K562 (cell line): ENCODE measurements at regions of chr1 and their contacts with region 1.

Region 1: GRCh38 chr1:9196129-9197040 is 38.2 kb upstream of the H6PD start:
- DNase-seq: peak; percentile 65 to 71 (median 68)
- ATAC-seq: peak; percentile 93
- H3K4me3 ChIP-seq: no peak overlapping the region
- H3K27ac ChIP-seq: no peak overlapping the region
- H3K4me1 ChIP-seq: peaks cover 0 to 3% of the 10 kb centered on the region in 2 experiments; a peak in 1 of 5 replicates
- H3K27me3 ChIP-seq: peaks cover 53 to 76% of the 10 kb centered on the region in 2 experiments
- CTCF ChIP-seq: peak; percentile 90 to 97 (median 94)
- EP300 ChIP-seq: no peak
- POLR2A ChIP-seq: no peak
- RAD21 ChIP-seq: peak; percentile 96

Region 2: DNA sequence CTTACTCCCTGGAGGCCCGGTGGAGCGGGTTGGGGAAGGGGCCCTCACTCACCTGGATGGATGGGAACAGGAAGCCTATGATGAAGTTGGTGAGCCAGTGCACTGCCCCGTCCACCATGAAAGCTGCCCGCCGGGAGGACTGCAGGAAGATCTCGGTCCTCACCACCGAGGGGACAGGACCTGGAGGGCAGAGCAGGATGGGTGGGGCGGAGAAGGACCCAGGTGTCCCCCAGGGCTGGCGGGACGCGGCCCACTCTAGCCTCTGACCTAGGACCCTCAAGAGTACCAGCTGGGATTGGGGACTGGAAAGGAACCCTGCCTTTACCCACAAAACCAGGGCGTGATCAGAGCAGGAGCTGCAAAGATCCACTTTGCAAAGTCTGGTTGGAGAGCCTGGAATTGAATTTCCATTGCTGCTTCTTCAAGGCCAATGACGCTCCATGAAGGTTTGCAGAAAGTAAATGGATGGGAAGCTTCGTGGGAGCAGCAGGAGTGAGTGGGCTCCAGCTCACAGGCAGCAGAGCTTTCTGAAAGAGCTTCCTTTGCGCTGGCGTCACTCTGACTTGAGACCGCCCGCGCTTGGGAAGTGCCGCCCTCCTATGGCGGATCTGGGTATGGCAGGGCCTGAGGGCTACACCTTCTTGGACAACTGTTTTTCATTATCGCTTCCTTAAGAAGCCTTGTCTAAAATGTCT is 191.5 kb before region 1 on chr1:
- CTCF ChIA-PET with region 1: interaction called, 4 read pairs
- POLR2A ChIA-PET with region 1: no interaction called
- in situ Hi-C with region 1: loop called (anchors 10 kb)
- intact Hi-C with region 1: loop called (anchors 5 kb)
- DNase-seq: peak; percentile 86 to 91 (median 90)
- ATAC-seq: peak; percentile 96
- H3K4me3 ChIP-seq: no peak overlapping the region
- H3K27ac ChIP-seq: no peak overlapping the region
- H3K4me1 ChIP-seq: peaks cover 0 to 6% of the 10 kb centered on the region in 2 experiments; a peak in 2 of 5 replicates
- H3K27me3 ChIP-seq: peaks cover 46 to 79% of the 10 kb centered on the region in 2 experiments
- CTCF ChIP-seq: peak; percentile 93 to 98 (median 98)
- EP300 ChIP-seq: no peak
- POLR2A ChIP-seq: no peak
- RAD21 ChIP-seq: peak; percentile 59 to 83

Region 3: DNA sequence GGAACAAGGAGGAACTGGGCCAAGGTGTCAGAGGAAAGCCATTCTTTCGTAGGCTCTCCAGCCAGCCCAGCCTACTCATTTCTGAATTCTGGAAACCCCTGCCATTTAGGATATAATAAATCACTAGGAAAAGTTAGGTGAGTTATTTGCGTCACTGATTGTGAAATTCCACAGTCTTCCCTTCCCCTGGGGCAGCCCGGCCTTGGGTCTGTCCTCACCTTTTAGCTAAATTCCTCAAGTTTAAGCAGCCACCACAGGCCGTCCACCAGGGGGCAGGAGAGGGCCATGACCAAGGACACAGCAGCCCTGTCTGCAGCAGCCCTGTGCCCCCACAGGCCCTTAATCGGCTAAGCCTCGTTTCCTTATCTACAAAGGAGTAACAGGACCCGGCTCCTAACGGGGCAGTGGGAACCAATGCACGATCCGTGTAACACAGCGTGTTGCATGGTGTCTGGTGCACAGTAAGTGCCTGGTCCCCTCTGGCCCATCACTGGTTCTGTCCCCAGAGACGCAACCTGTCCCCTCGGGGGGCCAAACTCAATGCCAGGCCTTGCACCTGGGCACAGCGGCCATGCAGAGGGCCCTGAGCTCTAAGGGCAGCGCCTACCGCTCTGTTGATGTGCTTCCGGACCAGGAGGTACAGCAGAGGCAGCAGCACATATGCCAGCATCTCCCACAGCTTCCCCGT is 85.6 kb before region 1 on chr1:
- CTCF ChIA-PET with region 1: interaction called, 37 read pairs
- POLR2A ChIA-PET with region 1: interaction called, 3 read pairs
- in situ Hi-C with region 1: loop called (anchors 5 kb)
- intact Hi-C with region 1: loop called (anchors 1 kb)
- DNase-seq: peak; percentile 82 to 90 (median 84)
- ATAC-seq: peak; percentile 96
- H3K4me3 ChIP-seq: no peak overlapping the region
- H3K27ac ChIP-seq: no peak overlapping the region
- H3K4me1 ChIP-seq: peaks cover 0 to 4% of the 10 kb centered on the region in 2 experiments; a peak in 1 of 5 replicates
- H3K27me3 ChIP-seq: peaks cover 27 to 71% of the 10 kb centered on the region in 2 experiments
- CTCF ChIP-seq: peak; percentile 95 to 98 (median 98)
- EP300 ChIP-seq: no peak
- POLR2A ChIP-seq: no peak
- RAD21 ChIP-seq: peak; percentile 95 to 97

Region 4: DNA sequence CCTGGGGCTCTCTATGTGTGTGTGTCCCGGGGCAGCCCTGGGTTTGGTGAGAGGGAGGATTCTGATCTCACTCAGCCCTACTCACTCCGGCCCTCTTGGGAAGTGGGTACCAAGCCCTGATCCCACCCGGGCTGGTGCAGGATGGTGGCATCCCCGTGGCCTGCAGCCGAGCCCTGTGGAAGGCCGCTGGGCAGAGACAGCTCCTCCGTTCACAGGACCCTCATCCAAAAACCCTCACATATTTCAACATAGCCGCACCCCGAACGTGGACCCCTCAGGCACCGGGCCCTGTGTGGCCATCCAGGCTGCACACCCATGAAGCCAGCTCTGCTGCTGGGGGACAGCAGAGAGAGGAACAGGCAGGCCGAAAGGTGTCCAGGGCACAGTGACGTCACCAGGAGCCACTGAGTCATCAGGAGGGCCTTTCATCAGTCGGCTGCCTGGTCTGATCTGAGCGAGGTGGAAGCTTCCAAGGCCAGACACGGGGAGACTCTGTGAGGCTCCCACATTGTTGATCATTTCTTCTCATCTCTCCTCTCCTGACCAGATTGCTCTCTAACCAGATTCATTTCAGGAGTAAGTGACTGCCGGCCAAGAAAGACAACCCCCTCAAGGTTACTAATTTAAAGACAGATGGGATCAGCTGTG is 51.2 kb before region 1 on chr1:
- CTCF ChIA-PET with region 1: interaction called, 26 read pairs
- POLR2A ChIA-PET with region 1: interaction called, 3 read pairs
- in situ Hi-C with region 1: loop called (anchors 5 kb)
- intact Hi-C with region 1: loop called (anchors 1 kb)
- DNase-seq: peak; percentile 29 to 43 (median 40)
- ATAC-seq: peak; percentile 71
- H3K4me3 ChIP-seq: no peak overlapping the region
- H3K27ac ChIP-seq: no peak overlapping the region
- H3K4me1 ChIP-seq: peaks cover 2 to 5% of the 10 kb centered on the region in 2 experiments; a peak in 1 of 5 replicates
- H3K27me3 ChIP-seq: peaks cover 21 to 46% of the 10 kb centered on the region in 2 experiments; a peak in 3 of 5 replicates
- CTCF ChIP-seq: no peak
- EP300 ChIP-seq: no peak
- POLR2A ChIP-seq: no peak
- RAD21 ChIP-seq: no peak